ENCODE measurements at regions of chrX and their contacts with region 1.

Region 1: DNA sequence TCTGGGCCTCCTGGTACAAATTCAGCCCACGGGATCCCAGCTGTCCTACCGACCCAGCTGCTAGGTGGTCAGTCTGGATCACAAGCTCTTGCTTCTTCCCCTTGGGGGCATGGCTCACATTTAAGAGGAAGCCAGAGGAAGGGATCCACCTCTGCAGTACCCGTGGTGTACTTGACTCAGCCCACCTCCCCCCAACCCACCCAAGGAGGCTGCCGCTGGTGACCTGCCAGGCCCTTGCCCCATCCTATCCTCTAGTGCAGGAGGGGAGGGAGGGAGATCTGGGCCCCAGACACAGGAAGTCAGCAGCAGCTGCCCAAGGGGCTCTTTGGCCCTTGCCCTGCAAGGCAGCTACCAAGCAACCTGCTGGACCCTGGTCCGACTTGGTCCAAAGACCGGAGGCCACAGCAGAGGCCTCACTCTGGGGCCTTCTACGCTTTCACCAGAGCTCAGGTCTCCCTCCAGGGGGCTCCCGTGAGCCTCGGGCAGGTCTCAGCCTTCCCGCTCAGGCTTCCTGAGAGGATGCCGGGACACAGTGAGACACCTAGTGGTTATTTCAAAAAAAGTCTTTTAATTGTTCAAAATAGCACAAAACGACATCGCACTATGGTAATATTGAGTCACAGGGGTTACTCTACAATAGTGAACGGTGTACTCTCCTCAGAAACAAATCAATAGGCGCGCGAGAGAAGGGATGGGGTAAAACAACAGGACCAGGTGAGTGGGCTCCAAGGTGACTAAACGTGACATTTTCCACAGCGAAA is 2.7 kb upstream of the RENBP start:
- DNase-seq: peak in 1 of 2 experiments; percentile 77
- H3K4me3 ChIP-seq: no peak overlapping the region
- H3K27ac ChIP-seq: peak overlapping the region; percentile 45; the same call in 1 of the 2 replicates
- H3K4me1 ChIP-seq: peaks cover 0 to 14% (median 3%) of the 10 kb centered on the region in 4 experiments; a peak in 5 of 7 replicates
- H3K27me3 ChIP-seq: no peaks in the 10 kb centered on the region
- CTCF ChIP-seq: peak in 2 of 3 experiments; percentile 77 to 99; a peak in 3 of 4 replicates
- EP300 ChIP-seq: no peak
- POLR2A ChIP-seq: no peak
- RAD21 ChIP-seq: peak; percentile 51 to 64

Region 2: DNA sequence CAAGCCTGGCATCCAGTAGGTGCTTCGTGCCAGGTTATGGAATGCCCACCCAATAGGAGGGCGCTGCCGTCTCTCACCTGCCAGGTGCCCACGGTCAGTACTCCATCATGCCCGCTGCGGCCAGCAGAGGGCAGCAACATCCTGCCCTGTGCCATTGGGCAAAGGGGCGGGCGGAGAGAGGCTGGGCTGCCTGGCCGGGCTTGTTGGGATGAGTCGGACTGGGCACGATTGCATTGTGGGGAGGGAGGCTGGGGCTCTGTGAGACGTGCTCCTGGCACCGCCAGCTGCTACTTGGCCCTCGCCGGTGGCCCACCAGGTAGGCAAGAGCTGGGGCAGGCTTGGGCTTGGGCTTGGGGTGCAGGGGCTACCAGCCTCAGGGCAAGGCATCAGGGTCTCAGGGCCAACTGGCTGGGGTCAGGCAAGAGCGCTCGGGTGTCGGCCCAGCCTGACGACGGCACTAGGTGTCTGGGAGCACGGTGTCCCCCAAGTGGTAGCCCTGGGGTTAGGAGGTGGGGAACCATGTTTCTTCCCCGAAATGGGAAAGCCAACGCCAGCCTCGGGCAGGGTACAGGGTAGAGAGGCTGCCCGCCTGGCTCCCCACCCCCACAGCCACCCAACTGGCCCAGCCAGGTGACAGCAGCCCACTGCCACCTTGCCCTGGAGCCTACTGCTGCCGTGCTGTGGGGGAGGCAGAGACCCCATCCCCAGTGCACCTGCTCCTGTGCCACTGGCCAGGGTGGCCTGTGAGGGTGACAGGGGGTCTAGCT is 183.0 kb before region 1 on chrX and contains the start of gene PLXNB3:
- CTCF ChIA-PET with region 1: interaction called, 16 read pairs
- POLR2A ChIA-PET with region 1: no interaction called
- DNase-seq: peak; percentile 50 to 87
- H3K4me3 ChIP-seq: no peak within 1 kb of the TSS
- H3K27ac ChIP-seq: no peak within 1 kb of the TSS
- H3K4me1 ChIP-seq: peaks cover 0 to 8% (median 4%) of the 10 kb centered on the region in 4 experiments; a peak in 5 of 7 replicates
- H3K27me3 ChIP-seq: no peaks in the 10 kb centered on the region
- CTCF ChIP-seq: peak in 2 of 3 experiments; percentile 84 to 86; a peak in 3 of 4 replicates
- EP300 ChIP-seq: no peak
- POLR2A ChIP-seq: no peak
- RAD21 ChIP-seq: peak; percentile 90 to 92
- total RNA-seq, gene PLXNB3: 2.7 TPM in 2 replicates

Region 3: GRCh38 chrX:153927922-153928760 is 19.0 kb before region 1 on chrX:
- CTCF ChIA-PET with region 1: interaction called, 272 read pairs
- POLR2A ChIA-PET with region 1: interaction called, 231 read pairs
- DNase-seq: peak; percentile 84 to 87
- H3K4me3 ChIP-seq: peak overlapping the region; percentile 55 to 77 (median 62)
- H3K27ac ChIP-seq: peak overlapping the region; percentile 79
- H3K4me1 ChIP-seq: peaks cover 3 to 18% (median 12%) of the 10 kb centered on the region in 4 experiments
- H3K27me3 ChIP-seq: no peaks in the 10 kb centered on the region
- CTCF ChIP-seq: no peak
- EP300 ChIP-seq: no peak
- POLR2A ChIP-seq: peak in 1 of 2 experiments; percentile 55; a peak in 2 of 3 replicates
- RAD21 ChIP-seq: no peak

Region 4: GRCh38 chrX:153934473-153935325 is 12.5 kb before region 1 on chrX and contains the start of gene NAA10:
- CTCF ChIA-PET with region 1: interaction called, 272 read pairs
- POLR2A ChIA-PET with region 1: interaction called, 231 read pairs
- DNase-seq: peak in 1 of 2 experiments; percentile 63
- H3K4me3 ChIP-seq: peak within 1 kb of the TSS; percentile 57 to 87 (median 66)
- H3K27ac ChIP-seq: no peak within 1 kb of the TSS
- H3K4me1 ChIP-seq: peaks cover 0 to 5% (median 4%) of the 10 kb centered on the region in 4 experiments; a peak in 5 of 7 replicates
- H3K27me3 ChIP-seq: no peaks in the 10 kb centered on the region
- CTCF ChIP-seq: no peak
- EP300 ChIP-seq: no peak
- POLR2A ChIP-seq: no peak
- RAD21 ChIP-seq: no peak
- total RNA-seq, gene NAA10: 98.1 and 98.8 TPM in 2 replicates

Region 5: DNA sequence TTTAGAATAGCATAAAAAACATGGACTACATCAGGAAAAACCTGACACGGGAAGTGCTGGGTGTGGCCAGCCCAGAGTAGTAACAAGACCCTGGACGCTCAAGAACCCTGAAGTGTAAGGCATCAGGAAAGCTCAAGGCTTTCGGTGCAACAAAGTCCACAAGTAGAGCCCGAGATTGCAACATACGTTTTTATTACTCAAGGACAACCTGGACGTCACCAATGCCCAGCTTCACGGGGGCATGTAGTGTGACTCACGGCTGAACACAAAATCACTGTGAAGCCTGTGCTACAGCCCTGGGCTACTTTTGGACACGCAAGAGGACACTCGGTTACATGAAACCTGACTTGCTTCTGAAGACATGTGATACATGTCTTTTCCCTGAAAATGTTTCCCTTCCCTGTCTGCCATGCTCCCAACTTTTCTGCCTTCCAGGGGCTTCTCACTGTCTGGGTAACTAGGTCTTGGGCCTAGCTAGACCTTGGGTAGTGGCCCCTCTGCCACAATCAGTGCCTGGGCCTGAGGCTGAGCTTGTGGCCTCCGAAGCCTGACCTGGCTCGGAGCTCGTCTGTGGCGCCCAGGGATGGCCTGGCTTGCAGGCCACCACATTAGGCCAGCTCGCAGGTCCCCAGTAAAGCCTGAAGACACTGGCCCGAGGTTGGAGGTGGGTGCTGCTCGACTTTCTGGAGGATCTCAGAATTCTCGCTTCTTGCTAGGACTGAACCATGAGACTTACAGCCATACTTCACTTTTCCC is 63.3 kb after region 1 on chrX:
- CTCF ChIA-PET with region 1: no interaction called
- POLR2A ChIA-PET with region 1: no interaction called
- DNase-seq: no peak
- H3K4me3 ChIP-seq: no peak overlapping the region
- H3K27ac ChIP-seq: no peak overlapping the region
- H3K4me1 ChIP-seq: peaks cover 0 to 3% (median under 1%) of the 10 kb centered on the region in 4 experiments; a peak in 1 of 7 replicates
- H3K27me3 ChIP-seq: no peaks in the 10 kb centered on the region
- CTCF ChIP-seq: no peak
- EP300 ChIP-seq: no peak
- POLR2A ChIP-seq: no peak
- RAD21 ChIP-seq: no peak

Measured in H1 (cell line).